ENCODE measurements at regions of chr2 and their contacts with region 1.

Region 1: GRCh38 chr2:219571311-219572236 is at the start of gene OBSL1:
- DNase-seq: peak; percentile 89
- total RNA-seq, gene OBSL1: 199 TPM

Region 2: DNA sequence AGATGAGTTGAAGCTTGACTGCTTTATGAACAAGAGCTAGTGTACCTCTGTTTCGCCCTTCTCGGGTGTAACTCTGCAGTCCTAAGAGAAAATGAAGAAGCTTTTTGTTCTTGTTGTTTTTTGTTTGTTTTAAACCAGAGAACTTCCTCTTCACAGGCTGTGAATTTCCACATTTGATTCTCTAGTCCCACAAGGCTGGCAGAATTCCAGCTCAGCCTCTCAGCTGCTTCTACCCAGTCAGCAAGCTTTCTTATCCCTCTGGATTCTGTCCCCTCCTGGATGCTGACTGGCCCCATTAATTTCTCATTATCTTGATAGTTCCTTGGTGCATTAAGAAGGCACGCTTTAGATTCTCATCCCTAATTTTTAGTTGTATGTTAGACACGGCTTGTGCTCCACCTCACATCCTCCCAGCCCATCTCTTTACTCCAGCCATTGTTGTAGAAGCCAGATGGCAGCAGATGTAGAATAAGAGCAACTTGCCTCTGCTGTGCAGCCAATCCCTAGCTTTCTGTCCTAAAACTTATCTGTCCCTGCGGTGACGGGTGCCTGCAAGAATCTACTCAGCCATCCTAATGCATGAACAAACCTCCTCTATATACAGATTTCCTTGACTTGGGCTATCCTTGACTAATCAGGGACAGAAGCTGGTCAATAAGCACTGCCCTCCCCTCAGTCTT is 226.7 kb before region 1 on chr2:
- intact Hi-C with region 1: no loop called
- DNase-seq: no peak

Region 3: GRCh38 chr2:219433666-219434467 is 137.7 kb before region 1 on chr2:
- intact Hi-C with region 1: no loop called
- DNase-seq: no peak

Region 4: DNA sequence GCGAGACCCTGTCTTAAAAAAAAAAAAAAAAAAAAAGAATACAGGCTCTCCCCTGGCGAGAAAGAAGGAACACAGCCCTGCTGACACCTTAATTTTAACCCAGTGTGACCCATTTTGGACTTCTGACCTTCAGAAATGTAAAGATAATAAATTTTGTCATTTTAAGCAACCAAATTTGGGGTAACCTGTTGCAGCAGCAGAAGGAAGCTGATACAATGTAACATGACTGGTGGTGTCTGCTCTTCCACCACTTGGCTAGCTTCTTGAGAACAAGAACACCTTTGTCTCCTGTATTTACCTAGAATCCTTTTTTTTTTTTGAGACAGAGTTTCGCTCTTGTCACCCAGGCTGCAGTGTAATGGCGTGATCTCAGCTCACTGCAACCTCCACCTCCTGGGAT is 19.5 kb after region 1 on chr2:
- intact Hi-C with region 1: loop called (anchors 2 kb)
- DNase-seq: no peak

Region 5: DNA sequence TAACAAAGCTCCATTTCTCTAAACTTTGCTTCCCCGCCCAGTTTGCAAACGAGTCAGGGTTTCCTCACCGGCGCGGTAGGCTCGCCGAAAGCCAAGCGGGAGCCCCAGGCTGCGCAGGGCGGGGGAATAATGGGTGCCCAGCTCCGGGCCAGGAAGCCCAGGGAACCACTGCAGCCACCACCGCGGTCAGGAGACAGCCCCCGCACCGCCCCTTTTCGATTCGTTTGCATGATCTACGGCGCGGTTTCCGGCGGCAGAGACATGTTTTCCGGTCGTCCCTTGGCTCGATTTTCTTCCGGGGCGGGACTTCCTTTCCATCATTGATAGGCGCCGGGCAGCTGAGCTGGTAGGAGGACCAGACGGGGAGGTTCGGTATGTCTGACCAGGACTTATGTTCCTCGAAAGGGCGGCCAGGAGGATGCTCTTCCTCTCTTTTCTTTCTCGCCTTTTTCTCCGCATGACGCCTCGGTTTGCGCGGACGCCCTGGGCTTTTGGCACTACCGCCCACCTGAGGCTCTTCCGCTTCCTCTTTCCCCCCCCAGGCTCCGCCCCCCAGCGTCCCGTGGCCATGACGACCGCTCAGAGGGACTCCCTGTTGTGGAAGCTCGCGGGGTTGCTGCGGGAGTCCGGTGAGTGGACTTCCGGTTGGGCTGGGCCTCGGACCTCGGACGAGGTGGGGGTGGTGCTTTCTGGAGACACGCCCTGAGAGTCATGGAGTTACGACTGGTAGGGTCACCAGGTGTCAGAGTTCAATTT is 26.2 kb after region 1 on chr2 and contains the start of gene STK11IP:
- intact Hi-C with region 1: loop called (anchors 2 kb)
- DNase-seq: peak; percentile 97
- total RNA-seq, gene STK11IP: 20.2 TPM